B cell (primary cell): ENCODE measurements at regions of chr10 and their contacts with region 1.

Region 1: DNA sequence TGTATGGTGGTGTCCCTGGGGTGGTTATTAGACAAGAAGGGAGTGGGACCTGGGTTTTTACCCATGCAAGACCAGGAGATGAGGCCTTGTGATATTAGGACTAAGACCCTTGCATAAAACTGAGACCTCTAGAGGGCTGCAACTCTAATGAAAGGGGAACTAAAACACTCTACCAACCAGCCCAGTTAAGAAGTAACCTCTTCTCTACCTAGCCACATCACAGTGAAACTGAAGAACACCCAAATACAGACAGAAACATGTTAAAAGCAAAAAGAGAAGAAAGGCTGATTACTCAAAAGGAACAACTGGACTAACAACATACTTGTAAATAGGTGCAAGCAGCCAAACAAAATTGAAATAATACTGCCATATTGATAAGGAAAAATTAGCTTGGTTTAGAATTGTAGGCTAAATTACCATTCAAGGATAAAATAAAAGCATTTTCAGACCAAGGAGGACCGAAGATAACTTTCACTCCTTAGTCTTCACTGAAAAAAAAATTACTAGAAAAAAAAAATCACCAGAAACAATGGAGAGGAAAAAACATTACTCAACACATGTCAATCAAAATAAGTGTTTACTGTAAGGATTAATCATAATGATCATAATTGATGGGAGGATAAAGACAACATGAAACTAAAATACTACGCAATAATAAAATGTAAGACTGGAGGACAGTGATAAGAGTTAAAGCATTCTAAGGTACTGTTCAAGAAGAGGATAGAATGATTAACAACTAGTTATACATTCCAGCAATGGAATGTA is 27.6 kb downstream of the ERLIN1 start:
- DNase-seq: no peak
- ATAC-seq: no peak
- H3K4me3 ChIP-seq: no peak overlapping the region
- H3K4me3 Mint-ChIP-seq: no peak overlapping the region
- H3K27ac ChIP-seq: no peak overlapping the region
- H3K27ac Mint-ChIP-seq: no peak overlapping the region
- H3K4me1 ChIP-seq: no peaks in the 10 kb centered on the region
- H3K4me1 Mint-ChIP-seq: peaks cover 4% of the 10 kb centered on the region
- H3K27me3 ChIP-seq: no peaks in the 10 kb centered on the region
- H3K27me3 Mint-ChIP-seq: no peaks in the 10 kb centered on the region
- CTCF ChIP-seq: no peak

Region 2: GRCh38 chr10:101660256-101660655 is 1502.0 kb after region 1 on chr10:
- CTCF ChIA-PET with region 1: no interaction called
- POLR2A ChIA-PET with region 1: no interaction called
- intact Hi-C with region 1: loop called (anchors 10 kb)
- DNase-seq: no peak
- ATAC-seq: no peak
- H3K4me3 ChIP-seq: no peak overlapping the region
- H3K4me3 Mint-ChIP-seq: no peak overlapping the region
- H3K27ac ChIP-seq: no peak overlapping the region
- H3K27ac Mint-ChIP-seq: no peak overlapping the region
- H3K4me1 ChIP-seq: no peaks in the 10 kb centered on the region
- H3K4me1 Mint-ChIP-seq: no peaks in the 10 kb centered on the region
- H3K27me3 ChIP-seq: no peaks in the 10 kb centered on the region
- H3K27me3 Mint-ChIP-seq: no peaks in the 10 kb centered on the region
- CTCF ChIP-seq: no peak